ENCODE measurements at regions of chr18 and their contacts with region 1.

Region 1: GRCh38 chr18:25298853-25299274 is 53.1 kb downstream of the ZNF521 start:
- DNase-seq: peak; percentile 44 to 75 (median 61)
- ATAC-seq: peak; percentile 47 to 94 (median 84)
- H3K4me3 ChIP-seq: no peak overlapping the region
- H3K27ac ChIP-seq: peak overlapping the region in 9 of 12 donors; percentile 1 to 40 (median 29)
- H3K4me1 ChIP-seq: peaks cover 3 to 29% (median 14%) of the 10 kb centered on the region in 12 donors
- H3K27me3 ChIP-seq: no peaks in the 10 kb centered on the region
- CTCF ChIP-seq: no peak
- POLR2A ChIP-seq: no peak

Region 2: DNA sequence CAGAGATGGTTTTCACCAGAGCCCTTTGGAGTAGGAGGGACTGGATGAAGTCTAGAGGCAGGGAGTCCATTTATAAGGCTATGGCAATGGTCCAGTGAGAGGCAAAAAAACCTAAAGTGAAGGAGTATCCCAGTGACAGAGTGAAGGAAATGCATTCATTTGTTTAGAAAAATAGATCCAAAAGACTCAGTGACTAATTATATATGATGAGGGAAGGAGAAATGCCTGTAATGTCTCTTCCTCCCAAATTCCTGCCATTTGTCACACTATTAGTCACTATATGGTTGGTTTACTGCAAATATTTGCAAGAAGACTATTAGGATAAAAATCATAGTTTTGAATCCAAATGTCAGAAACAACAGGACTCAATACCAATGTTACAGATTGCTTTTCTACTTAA is 51.1 kb before region 1 on chr18:
- intact Hi-C with region 1: loop called in 1 of 10 experiments (anchors 5 kb)
- DNase-seq: no peak
- ATAC-seq: no peak
- H3K4me3 ChIP-seq: no peak overlapping the region
- H3K27ac ChIP-seq: no peak overlapping the region
- H3K4me1 ChIP-seq: peaks cover 0 to 35% (median 9%) of the 10 kb centered on the region in 12 donors
- H3K27me3 ChIP-seq: no peaks in the 10 kb centered on the region
- CTCF ChIP-seq: no peak
- POLR2A ChIP-seq: no peak

Region 3: DNA sequence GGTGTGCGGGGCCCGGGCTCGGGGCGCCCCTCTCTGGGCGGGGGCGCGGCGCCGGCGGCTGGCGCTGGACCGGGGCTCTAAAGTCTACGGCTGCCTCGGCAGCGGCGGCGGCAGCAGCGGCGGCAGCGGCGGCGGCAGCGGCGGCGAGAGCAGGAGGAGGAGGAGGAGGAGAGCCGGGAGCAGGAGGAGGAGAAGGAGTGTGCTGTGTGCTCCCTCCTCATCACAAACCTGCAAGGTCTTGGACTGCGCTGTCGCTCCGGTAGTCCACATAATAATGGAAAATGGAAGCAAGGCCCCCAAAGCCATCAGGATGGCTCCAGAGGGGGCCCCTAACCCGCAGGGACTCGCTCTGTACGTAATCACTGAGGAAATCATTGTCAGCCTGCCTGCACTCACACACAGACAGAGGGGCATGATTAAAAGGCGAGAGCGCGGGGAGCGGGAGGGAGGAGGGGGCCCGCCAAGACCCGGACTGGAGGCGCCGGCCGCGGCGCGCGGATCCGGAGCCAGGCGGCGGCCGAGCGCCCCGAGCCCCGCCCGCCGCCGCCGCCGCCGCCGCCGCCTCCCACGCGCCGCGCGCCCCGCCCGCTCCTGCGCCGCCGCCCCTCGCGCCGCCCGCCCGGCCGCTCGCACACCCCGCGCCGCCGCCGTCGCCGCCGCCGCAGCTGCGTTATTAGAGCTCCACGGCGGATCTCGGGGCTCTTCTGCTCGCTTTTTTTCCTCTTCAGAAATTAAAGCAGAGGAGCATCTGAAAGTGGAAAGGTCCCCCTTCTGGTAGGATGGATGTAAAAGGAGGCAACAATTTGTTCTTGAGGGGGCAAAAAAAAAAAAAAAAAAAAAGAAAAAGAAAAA is 53.1 kb after region 1 on chr18 and contains the start of gene ZNF521:
- intact Hi-C with region 1: no loop called
- DNase-seq: peak; percentile 89 to 90 (median 90)
- ATAC-seq: peak; percentile 83 to 93 (median 87)
- H3K4me3 ChIP-seq: peak within 1 kb of the TSS; percentile 52 to 89 (median 78)
- H3K27ac ChIP-seq: peak within 1 kb of the TSS; percentile 80 to 95 (median 91)
- H3K4me1 ChIP-seq: peaks cover 0 to 24% (median 7%) of the 10 kb centered on the region in 12 donors
- H3K27me3 ChIP-seq: peaks cover 0 to 31% (median 0%) of the 10 kb centered on the region in 9 donors
- CTCF ChIP-seq: peak in 8 of 12 donors; percentile 16 to 45 (median 30)
- POLR2A ChIP-seq: peak in 1 of 2 donors; percentile 68
- total RNA-seq, gene ZNF521: 12.2 to 24.4 (median 15.2) TPM

Region 4: GRCh38 chr18:25614168-25614567 is 315.3 kb after region 1 on chr18:
- intact Hi-C with region 1: no loop called
- DNase-seq: no peak
- ATAC-seq: no peak
- H3K4me3 ChIP-seq: no peak overlapping the region
- H3K27ac ChIP-seq: no peak overlapping the region
- H3K4me1 ChIP-seq: no peaks in the 10 kb centered on the region
- H3K27me3 ChIP-seq: no peaks in the 10 kb centered on the region
- CTCF ChIP-seq: peak in 1 of 12 donors; percentile 9
- POLR2A ChIP-seq: no peak

Measured in heart left ventricle (tissue), 16 donors.